PC-3 (cell line): ENCODE measurements at regions of chr7 and their contacts with region 1.

Region 1: GRCh38 chr7:83976295-83976694 is 218.3 kb downstream of the SEMA3A start:
- DNase-seq: peak; percentile 74
- ATAC-seq: peak; percentile 56
- H3K4me3 ChIP-seq: no peak overlapping the region
- H3K27ac ChIP-seq: peak overlapping the region; percentile 29
- H3K4me1 ChIP-seq: no peaks in the 10 kb centered on the region
- H3K27me3 ChIP-seq: no peaks in the 10 kb centered on the region
- CTCF ChIP-seq: peak; percentile 83

Region 2: DNA sequence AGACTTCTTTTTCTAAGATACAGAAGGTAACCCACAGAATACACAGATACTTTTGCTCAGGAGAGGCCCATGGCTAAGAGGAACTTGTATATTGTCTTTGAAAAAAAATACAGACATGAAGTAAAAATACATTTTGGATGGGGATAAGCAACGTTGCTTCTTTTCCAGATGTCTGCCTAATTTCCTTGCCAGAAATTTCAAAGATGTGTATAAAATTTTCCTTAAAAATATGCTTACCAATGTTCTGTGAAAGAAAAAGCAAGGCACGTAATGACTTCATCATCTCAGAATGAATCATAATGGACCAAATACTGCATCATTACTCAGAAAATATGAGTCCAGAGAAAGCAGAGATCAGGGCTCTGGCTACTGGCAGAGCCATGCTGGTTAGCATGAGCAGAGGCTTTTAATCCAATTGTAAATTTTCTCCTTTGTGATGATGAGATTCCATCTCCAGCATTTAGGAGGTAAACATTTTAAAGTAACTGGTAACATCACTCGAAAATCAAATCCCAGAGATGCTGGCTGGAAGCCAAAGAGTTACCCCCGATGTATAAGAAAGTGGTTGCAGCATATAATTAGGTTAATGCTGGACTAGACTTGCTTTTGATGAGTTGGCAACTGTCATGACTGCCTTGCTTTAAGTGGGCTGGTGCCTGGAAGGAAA is 54.2 kb before region 1 on chr7:
- CTCF ChIA-PET with region 1: no interaction called
- POLR2A ChIA-PET with region 1: no interaction called
- intact Hi-C with region 1: no loop called
- DNase-seq: no peak
- ATAC-seq: no peak
- H3K4me3 ChIP-seq: no peak overlapping the region
- H3K27ac ChIP-seq: no peak overlapping the region
- H3K4me1 ChIP-seq: no peaks in the 10 kb centered on the region; the same call in 1 of the 2 replicates
- H3K27me3 ChIP-seq: no peaks in the 10 kb centered on the region
- CTCF ChIP-seq: no peak

Region 3: DNA sequence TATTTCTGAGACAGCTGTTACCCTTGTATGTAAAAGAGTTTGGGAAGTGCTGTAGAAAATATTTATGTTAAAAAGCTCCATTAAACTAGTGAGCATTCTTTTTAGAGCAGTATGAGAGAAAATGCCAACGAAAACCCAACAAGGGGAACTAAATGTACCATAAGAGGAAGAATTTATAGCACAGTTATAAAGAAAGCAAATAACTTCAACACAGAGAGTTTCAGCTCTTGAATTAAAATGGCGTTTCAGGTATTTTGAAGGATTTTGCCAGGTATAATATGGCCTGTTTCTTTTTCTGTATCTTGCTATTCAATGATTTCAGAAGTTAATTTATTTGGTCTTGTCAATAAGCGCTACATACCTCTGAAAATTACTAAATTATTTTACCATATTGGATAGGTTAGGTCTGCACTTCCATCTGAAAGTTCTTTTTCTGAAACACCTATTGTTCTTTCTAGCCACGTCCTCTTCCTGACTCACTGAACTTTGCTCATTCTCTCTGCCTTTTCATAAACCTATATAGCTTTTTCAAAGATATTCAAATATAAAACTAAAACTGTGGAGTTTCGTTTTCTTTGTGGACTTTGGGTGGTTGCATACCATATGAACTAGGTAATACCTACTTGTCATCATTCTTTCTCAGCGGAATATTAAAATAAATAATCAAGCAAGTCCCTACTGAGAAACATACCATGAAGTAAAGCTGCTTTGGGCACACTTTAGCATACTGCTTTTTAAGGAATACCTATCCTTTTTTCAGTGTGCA is 82.2 kb after region 1 on chr7:
- CTCF ChIA-PET with region 1: no interaction called
- POLR2A ChIA-PET with region 1: no interaction called
- intact Hi-C with region 1: loop called (anchors 5 kb)
- DNase-seq: peak; percentile 88
- ATAC-seq: peak; percentile 60
- H3K4me3 ChIP-seq: peak overlapping the region; percentile 39; the same call in 1 of the 2 replicates
- H3K27ac ChIP-seq: peak overlapping the region; percentile 93
- H3K4me1 ChIP-seq: peaks cover 59% of the 10 kb centered on the region
- H3K27me3 ChIP-seq: no peaks in the 10 kb centered on the region
- CTCF ChIP-seq: no peak

Region 4: DNA sequence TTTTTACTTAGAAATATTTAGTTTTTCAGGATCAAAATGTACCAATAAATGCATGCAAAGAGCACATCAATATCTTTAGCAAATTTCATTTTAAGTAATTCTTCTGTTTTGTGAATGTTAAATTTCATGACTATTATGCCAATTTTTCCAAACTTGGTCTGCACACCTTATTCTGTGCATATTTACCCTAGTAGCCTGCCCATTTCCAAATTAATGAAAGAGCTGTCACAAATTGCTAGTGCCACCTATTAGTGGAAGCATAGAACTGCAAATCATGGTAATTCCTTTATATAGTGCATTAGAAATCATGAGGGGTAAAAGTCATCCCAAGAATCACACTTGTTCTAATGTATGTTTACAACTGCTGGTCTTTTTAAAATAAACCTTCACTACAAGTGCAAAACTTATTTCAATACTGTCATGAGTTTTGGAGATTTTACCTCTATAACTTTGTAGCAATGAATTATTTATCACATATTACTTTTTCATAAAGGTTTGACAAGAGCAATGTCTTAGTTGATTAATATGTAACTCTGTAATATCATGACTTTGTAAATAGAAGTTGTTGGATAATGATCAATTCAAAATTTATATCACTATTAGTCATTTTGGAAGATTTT is 212.6 kb after region 1 on chr7:
- CTCF ChIA-PET with region 1: no interaction called
- POLR2A ChIA-PET with region 1: no interaction called
- intact Hi-C with region 1: loop called (anchors 1 kb)
- DNase-seq: peak; percentile 63
- ATAC-seq: peak; percentile 16; the same call in 1 of the 2 replicates
- H3K4me3 ChIP-seq: peak overlapping the region; percentile 55
- H3K27ac ChIP-seq: peak overlapping the region; percentile 94
- H3K4me1 ChIP-seq: peaks cover 56% of the 10 kb centered on the region
- H3K27me3 ChIP-seq: no peaks in the 10 kb centered on the region
- CTCF ChIP-seq: peak; percentile 80

Region 5: DNA sequence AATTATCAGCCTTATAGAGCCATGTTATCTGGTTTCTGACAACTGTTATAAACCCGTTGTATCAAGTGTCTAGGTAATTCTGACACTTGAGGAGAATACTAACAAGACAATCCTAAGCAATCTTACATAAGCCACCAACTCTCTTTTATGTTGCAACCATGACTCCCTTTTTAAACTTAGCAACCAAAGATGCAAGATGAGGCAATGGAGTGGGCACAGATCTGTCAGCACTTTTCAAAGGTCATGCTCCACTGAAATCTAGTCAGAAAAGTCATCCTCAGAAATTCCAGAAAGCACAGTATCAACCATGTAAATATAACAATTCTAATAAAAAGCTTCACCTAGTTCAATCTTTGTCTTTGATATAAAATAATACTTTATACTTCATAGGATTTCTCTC is 295.2 kb after region 1 on chr7:
- CTCF ChIA-PET with region 1: no interaction called
- POLR2A ChIA-PET with region 1: no interaction called
- intact Hi-C with region 1: no loop called
- DNase-seq: no peak
- ATAC-seq: no peak
- H3K4me3 ChIP-seq: no peak overlapping the region
- H3K27ac ChIP-seq: no peak overlapping the region
- H3K4me1 ChIP-seq: no peaks in the 10 kb centered on the region
- H3K27me3 ChIP-seq: no peaks in the 10 kb centered on the region
- CTCF ChIP-seq: no peak

Region 6: DNA sequence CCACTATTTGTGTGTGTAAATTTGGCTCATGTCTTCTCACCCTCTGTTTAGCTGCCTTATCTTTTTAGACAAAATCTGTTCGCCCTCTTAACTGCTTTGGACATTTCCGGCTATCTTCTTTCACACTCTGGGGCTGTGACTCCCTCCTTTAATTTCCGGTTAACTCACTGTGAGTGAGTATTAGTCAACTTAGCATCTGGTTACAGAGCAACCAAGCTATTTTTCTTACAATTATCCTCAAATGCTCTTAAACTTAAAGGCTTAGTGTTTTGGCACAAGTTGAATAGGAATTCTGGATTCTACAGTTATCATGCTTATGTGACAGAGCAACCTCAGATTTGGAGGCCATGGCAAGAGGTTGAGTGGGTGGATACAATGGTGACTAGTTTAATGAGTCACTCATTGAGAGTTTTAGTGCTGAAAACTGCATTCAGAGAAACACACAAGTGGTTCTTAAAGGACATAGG is 395.9 kb after region 1 on chr7:
- CTCF ChIA-PET with region 1: no interaction called
- POLR2A ChIA-PET with region 1: no interaction called
- intact Hi-C with region 1: loop called (anchors 10 kb)
- DNase-seq: peak; percentile 88
- ATAC-seq: peak; percentile 88
- H3K4me3 ChIP-seq: no peak overlapping the region
- H3K27ac ChIP-seq: peak overlapping the region; percentile 80
- H3K4me1 ChIP-seq: peaks cover 34% of the 10 kb centered on the region
- H3K27me3 ChIP-seq: no peaks in the 10 kb centered on the region
- CTCF ChIP-seq: no peak

Region 7: DNA sequence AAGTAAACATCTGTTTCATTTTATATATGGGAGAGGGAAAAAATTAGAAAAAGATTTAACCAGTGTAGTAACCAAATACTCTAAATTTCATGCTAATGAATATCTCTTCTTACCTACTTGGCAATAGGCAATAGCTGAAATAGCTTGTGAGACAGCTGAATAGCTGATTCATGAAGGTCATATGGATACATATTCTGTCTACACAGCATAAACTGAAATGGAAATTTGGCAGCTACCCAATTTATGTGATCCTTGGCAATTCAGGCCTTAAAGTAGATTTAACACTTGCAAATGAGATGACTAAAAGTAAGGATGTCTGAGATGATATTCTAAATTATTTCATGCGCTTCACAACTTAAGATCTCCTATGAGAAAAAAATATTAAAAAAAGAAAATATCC is 479.5 kb after region 1 on chr7:
- CTCF ChIA-PET with region 1: no interaction called
- POLR2A ChIA-PET with region 1: no interaction called
- intact Hi-C with region 1: loop called (anchors 1 kb)
- DNase-seq: peak; percentile 22
- ATAC-seq: no peak
- H3K4me3 ChIP-seq: no peak overlapping the region
- H3K27ac ChIP-seq: no peak overlapping the region
- H3K4me1 ChIP-seq: peaks cover 16% of the 10 kb centered on the region
- H3K27me3 ChIP-seq: no peaks in the 10 kb centered on the region
- CTCF ChIP-seq: no peak